K562 (cell line): ENCODE measurements at regions of chr20 and their contacts with region 1.

Region 1: DNA sequence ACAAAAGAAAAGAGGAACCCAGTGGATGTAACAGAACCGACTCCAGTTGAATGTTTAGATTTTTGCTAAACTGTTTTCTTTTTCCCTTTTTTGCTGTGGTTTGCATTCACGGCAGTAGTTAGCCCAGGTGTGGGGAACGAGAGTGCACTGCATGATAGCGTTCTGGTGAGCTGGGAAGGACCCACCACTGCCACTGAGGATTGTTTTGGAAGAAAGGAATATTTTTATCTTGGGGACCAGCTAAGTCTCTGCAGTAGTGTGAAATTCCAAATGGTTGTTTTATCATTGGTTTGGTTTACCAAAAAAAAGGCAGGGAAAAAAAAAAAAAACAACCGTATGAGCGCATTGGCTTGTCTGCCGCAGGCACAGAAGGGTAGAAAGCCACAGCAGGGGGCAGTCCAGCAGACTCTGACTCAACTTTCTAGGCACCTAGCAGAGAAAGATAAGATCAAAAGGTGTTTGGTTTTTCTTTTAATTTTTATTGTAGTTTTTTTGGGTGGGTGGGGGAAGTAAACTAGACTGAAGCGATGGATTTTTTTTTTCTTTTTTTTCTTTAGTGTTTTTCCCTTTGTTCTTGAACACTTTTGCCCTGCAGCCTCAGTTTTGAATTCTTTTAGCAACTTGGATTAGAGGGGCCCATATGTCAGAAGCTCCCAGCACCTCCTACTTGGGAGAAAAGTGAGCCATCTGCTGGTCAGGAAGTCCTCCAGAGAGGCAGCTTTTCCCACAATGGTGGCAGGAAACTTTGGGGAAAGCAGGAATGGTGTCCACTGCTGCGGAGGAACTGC is 13.5 kb upstream of the RAB5IF start:
- DNase-seq: peak; percentile 30 to 55 (median 42)
- ATAC-seq: peak; percentile 68
- H3K4me3 ChIP-seq: no peak overlapping the region
- H3K27ac ChIP-seq: no peak overlapping the region; the same call in 2 of the 3 replicates
- H3K4me1 ChIP-seq: peaks cover 7 to 11% of the 10 kb centered on the region in 2 experiments
- H3K27me3 ChIP-seq: no peaks in the 10 kb centered on the region
- CTCF ChIP-seq: peak; percentile 46 to 58 (median 58); a peak in 5 of 6 replicates
- EP300 ChIP-seq: no peak
- POLR2A ChIP-seq: no peak
- RAD21 ChIP-seq: no peak; a peak in 1 of 4 replicates

Region 2: GRCh38 chr20:36544088-36545018 is 47.7 kb before region 1 on chr20:
- CTCF ChIA-PET with region 1: no interaction called
- POLR2A ChIA-PET with region 1: no interaction called
- in situ Hi-C with region 1: no loop called
- intact Hi-C with region 1: no loop called
- DNase-seq: no peak
- ATAC-seq: no peak
- H3K4me3 ChIP-seq: no peak overlapping the region
- H3K27ac ChIP-seq: no peak overlapping the region
- H3K4me1 ChIP-seq: peaks cover 0 to 50% of the 10 kb centered on the region in 2 experiments; a peak in 3 of 5 replicates
- H3K27me3 ChIP-seq: no peaks in the 10 kb centered on the region
- CTCF ChIP-seq: no peak
- EP300 ChIP-seq: no peak
- POLR2A ChIP-seq: no peak
- RAD21 ChIP-seq: no peak

Region 3: GRCh38 chr20:36562724-36563123 is 29.3 kb before region 1 on chr20:
- CTCF ChIA-PET with region 1: no interaction called
- POLR2A ChIA-PET with region 1: no interaction called
- in situ Hi-C with region 1: no loop called
- intact Hi-C with region 1: loop called (anchors 1 kb)
- DNase-seq: no peak
- ATAC-seq: no peak
- H3K4me3 ChIP-seq: no peak overlapping the region
- H3K27ac ChIP-seq: no peak overlapping the region
- H3K4me1 ChIP-seq: no peaks in the 10 kb centered on the region
- H3K27me3 ChIP-seq: no peaks in the 10 kb centered on the region
- CTCF ChIP-seq: no peak
- EP300 ChIP-seq: no peak
- POLR2A ChIP-seq: no peak
- RAD21 ChIP-seq: no peak

Region 4: GRCh38 chr20:36605399-36606157 is 13.5 kb after region 1 on chr20 and contains the start of gene RAB5IF:
- CTCF ChIA-PET with region 1: no interaction called
- POLR2A ChIA-PET with region 1: interaction called, 18 read pairs
- in situ Hi-C with region 1: no loop called
- intact Hi-C with region 1: no loop called
- DNase-seq: peak; percentile 93 to 99 (median 94)
- ATAC-seq: peak; percentile 98
- H3K4me3 ChIP-seq: peak within 1 kb of the TSS; percentile 98
- H3K27ac ChIP-seq: peak within 1 kb of the TSS; percentile 89
- H3K4me1 ChIP-seq: peaks cover 8 to 12% of the 10 kb centered on the region in 2 experiments
- H3K27me3 ChIP-seq: no peaks in the 10 kb centered on the region
- CTCF ChIP-seq: peak; percentile 89 to 98 (median 98)
- EP300 ChIP-seq: peak; percentile 31; the same call in 1 of the 2 replicates
- POLR2A ChIP-seq: peak; percentile 91
- RAD21 ChIP-seq: peak; percentile 56 to 78
- polyA plus RNA-seq, gene RAB5IF: 26.5 to 41.9 TPM